Endothelial cell of umbilical vein (primary cell): ENCODE measurements at regions of chr6 and their contacts with region 1.

Region 1: GRCh38 chr6:28252009-28252975 is at the start of gene ZKSCAN4:
- DNase-seq: peak; percentile 83
- H3K4me3 ChIP-seq: peak within 1 kb of the TSS; percentile 85 to 89 (median 85)
- H3K27ac ChIP-seq: no peak within 1 kb of the TSS
- H3K4me1 ChIP-seq: peaks cover 12% of the 10 kb centered on the region
- H3K27me3 ChIP-seq: no peaks in the 10 kb centered on the region
- CTCF ChIP-seq: no peak
- POLR2A ChIP-seq: no peak
- total RNA-seq, gene ZKSCAN4: 3.6 and 4.1 TPM in 2 replicates

Region 2: GRCh38 chr6:28266962-28267694 is 14.8 kb after region 1 on chr6 and contains the start of gene ZSCAN26:
- CTCF ChIA-PET with region 1: interaction called, 17 read pairs
- POLR2A ChIA-PET with region 1: interaction called, 13 read pairs
- dilution Hi-C with region 1: no loop called
- intact Hi-C with region 1: loop called (anchors 1 kb)
- DNase-seq: peak; percentile 92
- H3K4me3 ChIP-seq: peak within 1 kb of the TSS; percentile 73 to 96 (median 85)
- H3K27ac ChIP-seq: peak within 1 kb of the TSS; percentile 71
- H3K4me1 ChIP-seq: peaks cover 35% of the 10 kb centered on the region
- H3K27me3 ChIP-seq: peaks cover 0 to 3% of the 10 kb centered on the region in 2 experiments
- CTCF ChIP-seq: no peak
- POLR2A ChIP-seq: peak; percentile 81
- total RNA-seq, gene ZSCAN26: 12.7 and 14.1 TPM in 2 replicates

Region 3: DNA sequence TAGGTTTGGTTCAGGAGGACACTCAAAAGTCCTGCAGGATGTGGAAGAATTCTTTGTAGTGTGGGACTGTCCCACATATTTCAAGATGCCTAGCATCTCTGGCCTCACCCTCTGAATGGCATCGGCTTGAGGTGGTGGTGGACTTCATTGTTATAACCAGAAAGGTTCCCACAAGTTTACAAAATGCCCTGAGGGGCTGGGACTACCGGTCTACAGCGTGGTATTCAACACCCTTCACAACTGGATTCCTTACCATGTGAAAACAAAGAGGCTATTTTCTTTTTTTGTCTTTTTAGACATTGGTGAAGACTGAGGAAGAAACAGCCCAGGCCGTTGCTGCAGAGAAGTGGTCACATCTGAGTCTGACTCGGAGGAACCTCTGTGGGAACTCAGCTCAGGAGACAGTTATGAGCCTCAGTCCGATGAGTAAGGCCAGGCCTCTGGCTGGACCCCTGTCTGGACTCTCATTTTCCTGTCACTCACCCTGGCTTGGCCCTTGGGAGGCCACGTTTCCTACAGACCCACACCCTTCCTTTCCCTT is 44.3 kb after region 1 on chr6:
- CTCF ChIA-PET with region 1: no interaction called
- POLR2A ChIA-PET with region 1: no interaction called
- dilution Hi-C with region 1: no loop called
- intact Hi-C with region 1: loop called (anchors 1 kb)
- DNase-seq: no peak
- H3K4me3 ChIP-seq: no peak overlapping the region
- H3K27ac ChIP-seq: no peak overlapping the region
- H3K4me1 ChIP-seq: no peaks in the 10 kb centered on the region
- H3K27me3 ChIP-seq: no peaks in the 10 kb centered on the region
- CTCF ChIP-seq: no peak
- POLR2A ChIP-seq: no peak

Region 4: GRCh38 chr6:28322661-28323060 is 70.4 kb after region 1 on chr6:
- CTCF ChIA-PET with region 1: no interaction called
- POLR2A ChIA-PET with region 1: no interaction called
- dilution Hi-C with region 1: no loop called
- intact Hi-C with region 1: no loop called
- DNase-seq: no peak
- H3K4me3 ChIP-seq: no peak overlapping the region
- H3K27ac ChIP-seq: no peak overlapping the region
- H3K4me1 ChIP-seq: no peaks in the 10 kb centered on the region
- H3K27me3 ChIP-seq: no peaks in the 10 kb centered on the region
- CTCF ChIP-seq: no peak
- POLR2A ChIP-seq: no peak

Region 5: DNA sequence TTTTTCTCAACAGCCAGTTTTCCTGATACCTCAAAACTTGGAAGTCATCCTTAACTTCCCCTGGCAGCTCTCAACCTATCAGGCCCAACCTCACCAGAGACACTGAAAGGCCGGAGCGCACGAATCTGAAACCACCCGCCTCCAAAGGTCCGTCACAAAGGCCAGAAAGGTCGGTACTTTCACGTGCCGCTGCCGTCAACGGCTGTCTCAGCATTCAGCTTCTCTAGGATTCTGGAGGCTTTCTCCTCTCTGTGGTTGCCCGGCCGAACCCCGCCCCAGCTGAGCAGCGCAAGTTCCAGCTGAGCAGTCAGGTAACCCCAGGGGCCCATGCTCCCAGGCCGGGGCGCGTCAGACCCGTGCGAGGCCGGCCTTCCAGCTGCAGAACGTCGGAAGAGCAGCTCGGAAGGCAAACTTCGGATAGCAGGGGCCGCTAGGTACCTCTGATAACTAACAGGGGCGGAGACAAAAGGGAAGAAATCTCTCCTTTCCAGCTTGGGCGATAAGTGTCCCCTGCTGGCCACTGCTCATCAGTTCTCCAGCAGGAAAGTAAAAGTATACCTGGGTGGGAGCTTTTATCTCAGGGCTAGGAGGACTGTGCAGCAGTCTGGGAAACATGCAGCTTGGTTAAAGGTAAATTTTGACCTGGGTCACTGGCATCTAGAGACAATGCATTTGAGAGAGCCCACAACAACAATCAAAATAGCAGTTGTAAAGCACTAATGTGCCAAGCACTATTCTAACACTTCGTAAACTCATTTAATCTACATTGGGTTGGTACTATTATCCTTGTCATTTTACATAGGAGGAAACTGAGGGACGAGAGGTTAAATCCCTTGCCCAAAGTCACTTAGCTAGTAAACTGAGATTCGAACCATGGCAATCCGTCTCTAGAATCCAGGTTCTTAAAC is 131.2 kb after region 1 on chr6:
- CTCF ChIA-PET with region 1: interaction called, 3 read pairs
- POLR2A ChIA-PET with region 1: no interaction called
- dilution Hi-C with region 1: no loop called
- intact Hi-C with region 1: loop called (anchors 2 kb)
- DNase-seq: peak; percentile 93
- H3K4me3 ChIP-seq: peak overlapping the region; percentile 37 to 45 (median 42)
- H3K27ac ChIP-seq: peak overlapping the region; percentile 14
- H3K4me1 ChIP-seq: peaks cover 9% of the 10 kb centered on the region
- H3K27me3 ChIP-seq: no peaks in the 10 kb centered on the region
- CTCF ChIP-seq: peak; percentile 54 to 62
- POLR2A ChIP-seq: no peak

Region 6: GRCh38 chr6:28542440-28543296 is 290.4 kb after region 1 on chr6:
- CTCF ChIA-PET with region 1: no interaction called
- POLR2A ChIA-PET with region 1: no interaction called
- dilution Hi-C with region 1: no loop called
- intact Hi-C with region 1: no loop called
- DNase-seq: peak; percentile 70
- H3K4me3 ChIP-seq: no peak overlapping the region
- H3K27ac ChIP-seq: no peak overlapping the region
- H3K4me1 ChIP-seq: peaks cover 13% of the 10 kb centered on the region
- H3K27me3 ChIP-seq: peaks cover 0 to under 1% of the 10 kb centered on the region in 2 experiments
- CTCF ChIP-seq: peak in 1 of 2 donors; percentile 33
- POLR2A ChIP-seq: no peak

Region 7: DNA sequence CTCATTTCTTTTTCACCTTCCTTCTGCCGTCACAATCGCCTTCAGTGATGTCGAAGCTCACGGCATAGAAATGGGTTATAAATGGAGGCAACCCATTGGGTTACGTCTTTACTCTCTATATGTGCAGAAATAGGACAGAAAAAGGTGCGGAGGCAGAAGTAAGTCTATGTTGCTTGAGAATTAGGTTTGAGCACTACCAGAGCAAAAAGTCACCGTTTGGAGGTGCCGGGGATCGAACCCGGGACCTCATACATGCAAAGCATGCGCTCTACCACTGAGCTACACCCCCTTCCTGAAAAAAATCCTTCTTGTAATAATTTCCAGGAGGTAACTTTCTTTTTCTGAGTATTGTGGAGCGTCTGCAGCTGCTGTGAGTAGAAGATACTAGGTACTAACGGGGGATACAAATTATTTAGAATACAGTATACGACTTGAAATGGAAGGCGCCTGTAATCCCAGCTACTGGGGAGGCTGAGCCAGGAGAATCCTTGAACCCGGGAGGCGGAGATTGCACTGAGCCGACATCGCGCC is 537.3 kb after region 1 on chr6:
- CTCF ChIA-PET with region 1: no interaction called
- POLR2A ChIA-PET with region 1: no interaction called
- dilution Hi-C with region 1: no loop called
- intact Hi-C with region 1: no loop called
- DNase-seq: peak; percentile 49
- H3K4me3 ChIP-seq: peak overlapping the region; percentile 5 to 65 (median 57)
- H3K27ac ChIP-seq: no peak overlapping the region
- H3K4me1 ChIP-seq: peaks cover under 1% of the 10 kb centered on the region
- H3K27me3 ChIP-seq: peaks cover 37 to 56% of the 10 kb centered on the region in 2 experiments
- CTCF ChIP-seq: no peak
- POLR2A ChIP-seq: no peak